Ascending aorta (tissue), 2 donors: ENCODE measurements at regions of chrX and their contacts with region 1.

Region 1: DNA sequence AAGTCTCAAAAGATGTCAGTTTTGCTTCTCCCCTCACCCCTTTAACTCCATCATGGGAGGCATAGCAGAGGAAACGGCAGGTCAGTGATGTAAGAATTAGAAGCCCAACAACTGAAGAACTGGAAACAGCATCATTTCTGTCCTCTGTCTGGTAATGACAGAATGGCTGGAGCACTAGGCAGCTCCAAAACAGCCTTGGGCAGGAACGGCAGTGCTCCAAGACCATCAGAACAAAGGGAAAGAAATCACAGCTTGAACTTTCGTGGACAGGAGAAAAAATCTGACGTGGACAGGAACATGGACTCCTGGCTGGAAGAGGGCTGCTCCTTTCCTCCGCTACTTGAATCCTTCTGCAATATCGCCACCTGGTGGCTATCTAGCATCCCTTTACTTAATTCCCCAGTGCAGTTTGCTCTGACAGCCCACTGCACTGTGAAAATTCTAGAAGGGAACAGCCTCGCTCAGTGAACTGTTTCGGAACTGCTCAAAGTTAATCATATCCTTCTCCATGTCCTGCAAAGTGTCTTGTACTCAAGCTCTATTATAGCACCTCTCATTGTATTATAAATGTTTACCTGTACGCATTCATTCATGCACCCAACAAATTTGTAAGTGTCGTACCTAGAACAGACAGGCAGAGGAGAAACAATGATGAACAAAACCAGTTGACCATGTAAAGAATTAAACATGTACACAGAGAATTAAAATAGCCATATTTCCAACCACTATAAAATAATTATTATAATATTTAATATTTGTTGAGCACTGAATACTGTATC is 20.4 kb downstream of the SLC25A53 start:
- DNase-seq: peak in 1 of 2 donors; percentile 84
- H3K4me3 ChIP-seq: peak overlapping the region; percentile 24 to 52
- H3K27ac ChIP-seq: peak overlapping the region; percentile 45 to 60
- H3K4me1 ChIP-seq: no peaks in the 10 kb centered on the region
- H3K27me3 ChIP-seq: no peaks in the 10 kb centered on the region
- CTCF ChIP-seq: peak; percentile 62 to 78 (median 69)

Region 2: GRCh38 chrX:104098151-104098808 is 38.1 kb before region 1 on chrX:
- intact Hi-C with region 1: loop called (anchors 1 kb)
- DNase-seq: no peak
- H3K4me3 ChIP-seq: no peak overlapping the region
- H3K27ac ChIP-seq: no peak overlapping the region
- H3K4me1 ChIP-seq: no peaks in the 10 kb centered on the region
- H3K27me3 ChIP-seq: no peaks in the 10 kb centered on the region
- CTCF ChIP-seq: peak; percentile 39 to 64 (median 56)